Mammary epithelial cell (primary cell): ENCODE measurements at regions of chr5 and their contacts with region 1.

Region 1: GRCh38 chr5:178732281-178732680 is 1.8 kb upstream of the ZNF354A start:
- DNase-seq: no peak
- H3K4me3 ChIP-seq: no peak overlapping the region
- H3K27ac ChIP-seq: no peak overlapping the region
- H3K4me1 ChIP-seq: no peaks in the 10 kb centered on the region
- H3K27me3 ChIP-seq: no peaks in the 10 kb centered on the region
- CTCF ChIP-seq: no peak

Region 2: GRCh38 chr5:178279725-178280438 is 452.4 kb before region 1 on chr5:
- CTCF ChIA-PET with region 1: no interaction called
- dilution Hi-C with region 1: no loop called
- in situ Hi-C with region 1: no loop called
- intact Hi-C with region 1: loop called (anchors 1 kb)
- DNase-seq: peak; percentile 51
- H3K4me3 ChIP-seq: no peak overlapping the region
- H3K27ac ChIP-seq: no peak overlapping the region
- H3K4me1 ChIP-seq: no peaks in the 10 kb centered on the region
- H3K27me3 ChIP-seq: no peaks in the 10 kb centered on the region
- CTCF ChIP-seq: peak; percentile 73 to 90

Region 3: DNA sequence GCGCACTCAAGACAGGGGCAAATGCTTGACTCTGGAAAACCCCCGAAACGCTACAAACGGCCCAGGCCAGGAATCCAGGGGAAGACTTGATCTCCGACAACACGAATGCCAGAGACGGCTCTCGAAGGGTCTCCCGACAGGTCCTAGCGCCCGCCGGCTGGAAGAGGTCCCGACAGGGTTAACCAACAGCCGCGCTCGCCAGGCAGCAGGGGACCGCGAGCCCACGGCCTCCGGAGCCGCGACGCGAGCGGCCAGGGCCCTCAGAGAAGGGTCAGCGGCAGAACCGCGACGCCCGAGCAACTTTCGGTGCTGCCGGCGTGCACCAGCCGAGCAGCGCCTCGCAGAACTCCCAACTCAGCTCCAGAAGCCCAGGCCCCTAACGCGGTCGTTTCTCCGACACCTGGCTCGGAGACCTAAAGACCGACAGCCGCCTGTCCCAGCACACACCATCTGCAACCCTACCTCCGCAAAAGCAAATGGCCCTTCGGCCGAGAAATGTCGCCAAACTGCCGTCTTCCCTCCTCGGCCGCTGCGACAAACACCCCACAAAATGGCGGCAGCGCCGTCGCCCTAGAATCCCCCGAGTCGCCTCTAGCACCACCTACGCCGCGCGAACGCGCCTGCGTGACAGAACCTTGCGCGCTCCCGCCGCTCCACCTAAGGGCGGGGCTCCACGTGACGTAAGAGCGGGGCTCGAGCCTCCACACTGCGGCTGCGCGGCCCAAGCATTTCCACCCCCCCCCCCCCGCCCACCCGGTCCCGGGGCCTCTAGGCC is 105.6 kb before region 1 on chr5 and contains the start of gene CLK4:
- CTCF ChIA-PET with region 1: interaction called, 3 read pairs
- dilution Hi-C with region 1: no loop called
- in situ Hi-C with region 1: no loop called
- intact Hi-C with region 1: loop called (anchors 1 kb)
- DNase-seq: peak; percentile 88
- H3K4me3 ChIP-seq: peak within 1 kb of the TSS; percentile 62 to 96 (median 86)
- H3K27ac ChIP-seq: peak within 1 kb of the TSS; percentile 89
- H3K4me1 ChIP-seq: peaks cover 11% of the 10 kb centered on the region
- H3K27me3 ChIP-seq: no peaks in the 10 kb centered on the region
- CTCF ChIP-seq: no peak
- total RNA-seq, gene CLK4: 17.5 to 31.7 TPM

Region 4: DNA sequence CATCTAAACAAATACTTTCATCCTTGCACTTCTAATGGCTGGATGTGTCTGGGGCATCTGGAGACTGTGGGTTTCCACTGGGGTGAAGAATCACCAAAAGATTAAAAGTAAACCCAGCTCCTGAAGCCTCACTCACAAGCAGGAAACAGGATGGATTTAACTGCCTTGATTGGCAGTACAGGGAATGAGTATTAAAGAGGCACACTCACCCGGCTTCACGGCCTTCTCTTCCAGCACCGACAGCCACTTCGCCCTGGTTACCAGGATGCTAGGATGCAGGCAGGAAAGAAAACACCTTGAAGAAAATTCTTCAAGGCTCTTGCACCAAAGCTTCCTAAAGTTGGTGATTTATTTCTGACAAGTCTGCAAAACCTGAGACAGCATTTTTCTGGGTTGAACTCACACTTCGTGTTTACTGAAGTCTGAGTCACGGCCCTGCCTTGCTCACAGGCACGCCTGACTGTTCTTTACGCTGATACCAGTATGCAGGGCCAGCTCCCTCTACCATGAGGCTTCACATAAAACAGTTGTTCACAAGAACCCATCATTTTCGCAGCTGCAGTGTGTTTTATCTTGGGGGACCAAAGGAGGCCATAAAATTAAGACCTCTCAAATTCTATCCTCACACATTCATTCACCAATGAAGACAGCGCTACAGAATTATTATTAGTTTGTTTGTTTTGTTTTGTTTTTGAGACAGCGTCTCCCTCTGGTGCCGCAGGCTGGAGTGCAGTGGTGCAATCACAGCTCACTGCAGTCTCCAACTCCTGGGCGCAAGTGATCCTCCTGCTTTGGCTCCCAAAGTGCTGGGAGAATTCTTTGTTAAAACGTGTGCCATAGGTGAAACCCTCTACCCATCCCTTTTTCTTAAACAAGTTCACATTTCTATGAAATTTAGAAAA is 54.8 kb after region 1 on chr5:
- CTCF ChIA-PET with region 1: no interaction called
- dilution Hi-C with region 1: no loop called
- in situ Hi-C with region 1: no loop called
- intact Hi-C with region 1: loop called (anchors 1 kb)
- DNase-seq: peak; percentile 87
- H3K4me3 ChIP-seq: no peak overlapping the region
- H3K27ac ChIP-seq: no peak overlapping the region
- H3K4me1 ChIP-seq: no peaks in the 10 kb centered on the region
- H3K27me3 ChIP-seq: no peaks in the 10 kb centered on the region
- CTCF ChIP-seq: peak in 1 of 2 donors; percentile 2

Region 5: DNA sequence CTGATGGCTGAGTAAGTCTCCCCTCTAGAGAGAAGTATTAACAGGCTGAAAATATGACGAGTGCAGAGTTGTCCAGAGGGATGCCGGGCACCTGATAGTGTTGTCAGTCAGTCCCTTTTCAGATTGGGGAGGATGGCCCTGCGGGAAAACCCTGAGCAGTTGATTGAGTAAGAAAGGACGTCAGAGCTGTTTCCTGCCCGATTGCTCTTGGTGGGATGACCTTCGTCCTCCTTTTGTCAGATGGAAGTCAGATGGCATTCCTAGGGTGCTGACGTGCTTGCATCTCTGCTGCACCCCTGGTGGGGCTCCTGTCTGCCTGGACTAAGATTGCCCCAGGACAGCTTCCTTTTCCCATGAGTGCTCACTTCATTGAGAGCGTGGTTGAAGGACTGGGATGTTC is 137.3 kb after region 1 on chr5:
- CTCF ChIA-PET with region 1: no interaction called
- dilution Hi-C with region 1: loop called (anchors 5 kb)
- in situ Hi-C with region 1: no loop called
- intact Hi-C with region 1: no loop called
- DNase-seq: no peak
- H3K4me3 ChIP-seq: no peak overlapping the region
- H3K27ac ChIP-seq: no peak overlapping the region
- H3K4me1 ChIP-seq: no peaks in the 10 kb centered on the region
- H3K27me3 ChIP-seq: no peaks in the 10 kb centered on the region
- CTCF ChIP-seq: no peak

Region 6: GRCh38 chr5:179166886-179167841 is 434.9 kb after region 1 on chr5:
- CTCF ChIA-PET with region 1: no interaction called
- dilution Hi-C with region 1: no loop called
- in situ Hi-C with region 1: no loop called
- intact Hi-C with region 1: no loop called
- DNase-seq: no peak
- H3K4me3 ChIP-seq: no peak overlapping the region
- H3K27ac ChIP-seq: no peak overlapping the region
- H3K4me1 ChIP-seq: no peaks in the 10 kb centered on the region
- H3K27me3 ChIP-seq: no peaks in the 10 kb centered on the region
- CTCF ChIP-seq: no peak